Mammary epithelial cell (primary cell): ENCODE measurements at regions of chr10 and their contacts with region 1.

Region 1: GRCh38 chr10:33073641-33074415 is 115.8 kb upstream of the ITGB1 start:
- DNase-seq: no peak
- H3K4me3 ChIP-seq: no peak overlapping the region
- H3K27ac ChIP-seq: no peak overlapping the region
- H3K4me1 ChIP-seq: no peaks in the 10 kb centered on the region
- H3K27me3 ChIP-seq: no peaks in the 10 kb centered on the region
- CTCF ChIP-seq: peak in 1 of 2 donors; percentile 20

Region 2: DNA sequence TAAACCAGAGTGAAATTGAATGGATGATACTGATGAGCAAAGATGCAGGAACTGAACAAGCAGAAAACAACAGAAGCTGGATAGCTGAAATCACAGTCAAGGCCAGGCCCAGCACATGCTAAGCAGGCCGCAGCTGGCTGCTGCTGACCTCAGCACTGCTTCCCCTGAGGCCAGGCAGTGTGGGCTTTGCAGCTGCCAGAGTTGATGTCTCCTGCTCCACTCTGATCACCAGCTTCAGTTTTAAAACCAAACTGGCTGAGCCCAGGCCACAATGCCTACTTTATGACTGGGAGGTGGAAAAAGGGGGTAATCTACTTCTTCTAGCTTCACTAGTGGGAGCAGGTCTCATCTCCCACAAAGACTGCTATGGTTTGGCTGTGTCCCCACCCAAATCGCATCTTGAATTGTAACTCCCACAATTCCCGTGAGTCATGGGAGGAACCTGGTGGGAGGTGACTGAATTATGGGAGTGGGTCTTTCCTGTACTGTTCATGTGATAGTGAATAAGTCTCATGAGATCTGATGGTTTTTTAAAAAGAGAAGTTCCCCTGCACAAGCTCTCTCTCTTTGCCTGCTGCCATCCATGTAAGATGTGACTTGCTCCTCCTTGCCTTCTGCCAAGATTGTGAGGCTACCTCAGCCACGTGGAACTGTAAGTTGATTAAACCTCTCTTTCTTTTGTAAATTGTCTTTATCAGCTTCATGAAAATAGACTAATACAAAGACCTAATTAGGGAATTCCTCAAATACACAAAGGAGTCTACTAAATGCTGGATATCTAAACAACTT is 20.6 kb after region 1 on chr10:
- CTCF ChIA-PET with region 1: no interaction called
- dilution Hi-C with region 1: no loop called
- in situ Hi-C with region 1: no loop called
- intact Hi-C with region 1: no loop called
- DNase-seq: no peak
- H3K4me3 ChIP-seq: no peak overlapping the region
- H3K27ac ChIP-seq: no peak overlapping the region
- H3K4me1 ChIP-seq: no peaks in the 10 kb centered on the region
- H3K27me3 ChIP-seq: no peaks in the 10 kb centered on the region
- CTCF ChIP-seq: no peak

Region 3: GRCh38 chr10:33115738-33116719 is 42.2 kb after region 1 on chr10:
- CTCF ChIA-PET with region 1: no interaction called
- dilution Hi-C with region 1: loop called (anchors 5 kb)
- in situ Hi-C with region 1: no loop called
- intact Hi-C with region 1: no loop called
- DNase-seq: no peak
- H3K4me3 ChIP-seq: no peak overlapping the region
- H3K27ac ChIP-seq: no peak overlapping the region
- H3K4me1 ChIP-seq: peaks cover 32% of the 10 kb centered on the region
- H3K27me3 ChIP-seq: no peaks in the 10 kb centered on the region
- CTCF ChIP-seq: peak; percentile 16 to 47